Activated naive CD4-positive, alpha-beta T cell treated with anti-CD3 and anti-CD28 coated beads for 36 hours (primary cell): ENCODE measurements at regions of chr11 and their contacts with region 1.

Region 1: DNA sequence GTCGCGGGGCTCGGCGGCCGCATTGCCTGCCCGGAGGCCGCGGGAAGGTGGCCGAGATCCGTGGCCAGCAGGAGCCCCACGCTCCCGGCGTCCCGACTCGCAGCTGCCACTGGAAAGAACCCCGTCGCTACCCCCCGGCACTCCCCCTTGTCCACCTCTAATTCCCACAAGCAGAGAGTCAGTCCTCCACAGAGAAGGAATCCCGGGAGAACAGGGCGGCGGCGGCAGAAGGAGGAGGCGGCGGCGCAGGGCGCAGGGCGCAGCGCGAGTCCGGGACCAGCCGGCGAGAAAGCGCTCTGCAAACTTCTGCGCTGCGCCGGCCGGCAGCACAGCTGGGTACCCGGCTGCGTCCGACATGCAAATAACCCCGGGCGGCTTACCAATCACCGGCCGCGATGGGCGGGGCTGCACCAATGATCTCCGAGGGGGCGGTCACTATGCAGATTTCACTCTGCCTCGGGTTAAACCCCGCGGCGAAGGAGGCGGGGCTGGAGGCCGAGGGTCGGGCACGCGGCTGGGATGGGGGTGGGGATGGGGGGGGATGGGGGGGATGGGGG is at the start of gene ABTB2:
- DNase-seq: peak; percentile 99
- H3K4me3 Mint-ChIP-seq: peak within 1 kb of the TSS; percentile 76
- H3K27ac Mint-ChIP-seq: peak within 1 kb of the TSS; percentile 69
- H3K4me1 Mint-ChIP-seq: peaks cover 16% of the 10 kb centered on the region
- H3K27me3 Mint-ChIP-seq: peaks cover 27% of the 10 kb centered on the region
- total RNA-seq, gene ABTB2: 3.1 to 3.7 TPM

Region 2: GRCh38 chr11:33808228-33808828 is 549.5 kb before region 1 on chr11:
- CTCF ChIA-PET with region 1: interaction called, 4 read pairs
- intact Hi-C with region 1: loop called (anchors 1 kb)
- DNase-seq: peak; percentile 92
- H3K4me3 Mint-ChIP-seq: no peak overlapping the region
- H3K27ac Mint-ChIP-seq: no peak overlapping the region
- H3K4me1 Mint-ChIP-seq: peaks cover 2% of the 10 kb centered on the region
- H3K27me3 Mint-ChIP-seq: peaks cover 7% of the 10 kb centered on the region

Region 3: DNA sequence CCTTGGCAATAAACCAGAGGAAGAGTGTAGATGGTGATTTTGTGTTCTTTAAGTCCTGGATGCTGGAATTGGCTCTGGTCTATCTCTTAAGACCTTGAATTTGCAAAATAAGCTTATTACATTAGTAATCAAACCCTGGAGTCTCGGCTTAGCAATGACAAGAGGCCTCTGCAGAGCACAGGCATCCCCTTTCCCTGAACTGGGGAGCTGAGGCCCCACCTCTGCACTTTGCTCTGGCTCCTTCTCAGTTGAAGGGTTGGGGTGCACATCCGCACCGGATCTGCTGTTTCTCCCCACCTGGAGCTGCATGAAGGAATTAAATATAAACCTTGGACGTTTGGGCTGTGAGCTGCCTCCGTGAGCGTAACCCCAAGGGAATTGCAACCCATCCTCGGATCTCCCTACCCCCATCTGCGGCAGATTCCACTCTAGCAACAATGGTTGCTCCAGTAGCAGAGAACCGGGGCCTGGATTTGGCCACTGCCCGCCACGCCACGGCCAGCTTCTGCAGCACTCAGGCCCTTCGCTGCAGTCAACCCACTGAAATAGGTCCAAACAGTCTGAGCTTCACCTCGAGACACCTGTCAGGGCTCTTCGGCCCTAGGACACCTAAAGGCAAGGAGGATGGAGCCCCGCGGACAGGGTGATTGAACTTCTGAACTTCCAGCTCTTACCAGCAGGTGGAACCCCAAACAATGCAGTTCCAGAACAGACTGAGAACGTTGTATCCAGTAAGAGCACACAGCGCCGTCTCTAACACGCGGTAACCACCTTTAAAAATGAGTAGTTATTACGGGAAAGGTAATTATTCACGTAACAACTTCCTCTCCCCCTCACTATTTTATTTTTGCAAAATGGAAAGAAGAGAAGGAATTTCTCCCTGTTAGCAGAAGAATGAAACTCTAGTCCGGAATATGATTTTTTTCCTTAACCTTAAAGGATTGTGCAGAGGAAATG is 361.0 kb before region 1 on chr11:
- CTCF ChIA-PET with region 1: interaction called, 10 read pairs
- intact Hi-C with region 1: loop called (anchors 1 kb)
- DNase-seq: peak; percentile 87
- H3K4me3 Mint-ChIP-seq: no peak overlapping the region
- H3K27ac Mint-ChIP-seq: no peak overlapping the region
- H3K4me1 Mint-ChIP-seq: peaks cover 13% of the 10 kb centered on the region
- H3K27me3 Mint-ChIP-seq: peaks cover 12% of the 10 kb centered on the region

Region 4: DNA sequence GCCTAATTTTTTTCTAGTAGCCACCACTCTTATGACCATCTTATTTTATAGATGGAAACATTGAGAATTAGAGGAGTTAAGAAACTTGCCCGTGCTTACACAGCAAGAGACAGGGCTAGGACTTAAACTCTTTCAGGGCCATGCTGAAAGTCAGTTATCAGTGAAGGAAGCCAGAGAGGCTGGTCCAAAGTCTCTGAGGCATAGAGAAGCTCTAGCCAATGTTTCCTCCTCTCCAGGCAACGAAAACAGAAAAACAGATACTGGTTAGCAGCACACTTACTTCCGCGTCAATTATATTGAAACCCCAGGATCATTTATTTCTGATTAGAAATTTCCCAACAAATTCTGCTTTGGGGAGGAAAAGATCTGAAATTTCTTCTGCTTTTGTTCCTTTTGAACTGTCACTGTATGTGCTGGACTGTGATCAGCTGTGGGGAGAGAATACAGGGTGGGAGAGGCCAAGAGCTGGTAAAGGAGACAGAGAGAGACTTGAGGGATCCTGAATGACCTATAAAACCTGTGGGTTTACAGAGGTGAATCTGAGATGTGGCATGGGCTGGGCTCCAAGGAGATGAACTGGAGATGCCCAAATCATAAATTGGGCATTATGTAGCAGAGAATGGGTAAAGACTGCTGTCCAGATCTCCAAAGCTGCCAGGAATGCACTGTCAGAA is 343.7 kb before region 1 on chr11:
- CTCF ChIA-PET with region 1: no interaction called
- intact Hi-C with region 1: no loop called
- DNase-seq: no peak
- H3K4me3 Mint-ChIP-seq: no peak overlapping the region
- H3K27ac Mint-ChIP-seq: no peak overlapping the region
- H3K4me1 Mint-ChIP-seq: no peaks in the 10 kb centered on the region
- H3K27me3 Mint-ChIP-seq: no peaks in the 10 kb centered on the region

Region 5: DNA sequence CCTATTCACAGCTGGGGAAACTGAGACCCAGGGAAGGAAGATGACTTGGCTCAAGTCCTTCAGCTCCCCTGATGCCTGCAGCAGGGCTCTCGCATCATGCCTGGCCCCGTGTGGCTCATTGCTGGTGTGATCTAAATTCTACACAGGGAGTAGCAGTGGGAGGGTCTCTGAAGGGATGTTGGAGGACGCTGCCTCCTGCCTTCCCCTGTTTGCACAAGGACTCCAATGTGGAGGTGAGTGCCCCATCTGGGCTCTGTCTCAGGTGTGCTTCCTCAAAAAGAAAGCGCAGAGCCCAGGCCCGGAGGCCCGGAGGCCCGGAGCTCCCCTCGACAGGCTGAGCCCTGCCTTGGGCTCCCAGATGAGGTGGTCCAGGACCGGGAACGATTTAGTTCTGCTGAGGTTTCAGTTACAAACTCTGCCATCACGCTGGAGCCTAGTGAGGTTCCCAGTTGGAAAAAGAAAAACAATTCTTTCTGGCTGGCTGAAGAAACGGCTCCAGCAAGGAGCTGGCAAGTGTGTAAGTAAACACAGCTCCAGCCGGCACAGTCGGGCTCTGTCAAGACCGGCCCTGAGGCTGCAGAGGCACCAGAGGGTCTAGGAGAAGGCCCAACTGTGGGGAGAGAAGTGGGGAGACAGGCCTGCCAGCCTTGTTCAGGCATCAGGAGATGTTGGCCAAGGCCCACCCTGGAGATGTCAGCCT is 202.6 kb before region 1 on chr11:
- CTCF ChIA-PET with region 1: interaction called, 5 read pairs
- intact Hi-C with region 1: loop called (anchors 5 kb)
- DNase-seq: no peak
- H3K4me3 Mint-ChIP-seq: no peak overlapping the region
- H3K27ac Mint-ChIP-seq: no peak overlapping the region
- H3K4me1 Mint-ChIP-seq: peaks cover 12% of the 10 kb centered on the region
- H3K27me3 Mint-ChIP-seq: no peaks in the 10 kb centered on the region

Region 6: DNA sequence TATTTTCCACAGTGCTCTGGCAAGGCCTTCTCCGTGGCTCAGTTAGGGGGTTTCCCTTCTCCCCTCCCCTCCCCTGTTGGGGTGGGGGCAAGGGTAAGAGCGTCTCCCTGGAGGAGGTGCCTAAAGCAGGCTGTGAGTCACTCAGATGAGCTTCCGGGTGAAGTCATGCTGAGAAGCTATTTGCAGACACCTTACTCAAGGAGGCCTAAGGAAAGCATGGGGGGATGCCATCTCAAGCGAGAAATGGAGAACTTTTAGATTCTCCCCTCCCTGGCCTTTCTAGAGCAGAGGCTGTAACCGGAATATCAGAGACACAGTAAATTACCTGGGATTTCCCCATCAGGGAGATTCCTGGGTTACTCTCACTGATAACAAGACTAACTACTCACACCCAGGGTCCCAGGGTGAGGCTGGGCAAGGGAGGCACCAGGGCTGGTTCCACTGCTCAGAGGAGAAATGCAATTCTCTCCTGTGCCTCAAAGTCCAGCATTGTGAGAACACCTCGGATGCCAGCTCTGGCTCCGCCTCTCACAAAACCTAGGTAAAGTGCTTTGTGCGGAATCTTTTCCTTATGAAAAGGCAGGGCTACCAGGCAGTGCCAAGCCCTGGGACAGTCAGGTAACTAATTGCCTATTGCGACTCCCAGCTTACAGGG is 123.6 kb before region 1 on chr11:
- CTCF ChIA-PET with region 1: interaction called, 5 read pairs
- intact Hi-C with region 1: loop called (anchors 1 kb)
- DNase-seq: peak; percentile 93
- H3K4me3 Mint-ChIP-seq: no peak overlapping the region
- H3K27ac Mint-ChIP-seq: peak overlapping the region; percentile 83
- H3K4me1 Mint-ChIP-seq: peaks cover 57% of the 10 kb centered on the region
- H3K27me3 Mint-ChIP-seq: no peaks in the 10 kb centered on the region

Region 7: DNA sequence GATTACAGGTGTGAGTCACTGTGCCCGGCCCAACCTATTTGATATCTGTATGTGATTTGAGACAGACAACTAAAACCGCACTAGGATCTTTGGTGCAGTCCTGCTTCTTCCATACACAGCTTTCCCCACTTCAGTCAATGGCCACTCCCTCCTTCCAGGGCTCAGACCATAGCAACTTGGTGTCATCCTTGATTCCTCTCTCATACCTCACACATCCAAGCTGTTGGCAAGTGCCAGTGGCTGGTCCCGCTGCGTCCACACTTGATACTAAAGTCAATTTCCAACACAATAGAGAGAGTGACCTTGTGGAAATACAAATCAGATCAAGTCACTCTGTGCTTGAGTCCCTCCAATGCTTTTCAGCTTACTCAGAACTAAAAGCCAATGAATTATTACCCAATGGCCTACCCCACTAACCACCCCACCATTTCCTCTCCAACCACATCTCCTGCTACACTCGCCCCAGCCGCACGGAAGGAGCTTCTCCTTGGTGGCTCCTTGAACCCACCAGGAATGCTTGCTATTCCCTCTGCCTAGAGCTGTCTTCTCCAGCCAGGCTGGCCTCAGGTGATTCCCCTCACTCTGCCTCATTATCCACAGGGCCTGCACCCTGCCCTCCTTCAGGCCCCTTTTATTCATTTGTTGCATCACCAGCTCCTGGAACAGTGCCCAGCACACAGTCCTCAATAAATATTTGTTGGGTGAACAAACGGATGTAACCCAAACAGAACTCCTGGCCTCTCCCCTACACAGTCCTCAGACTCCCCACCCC is 12.8 kb before region 1 on chr11:
- CTCF ChIA-PET with region 1: interaction called, 12 read pairs
- intact Hi-C with region 1: no loop called
- DNase-seq: no peak
- H3K4me3 Mint-ChIP-seq: no peak overlapping the region
- H3K27ac Mint-ChIP-seq: no peak overlapping the region
- H3K4me1 Mint-ChIP-seq: no peaks in the 10 kb centered on the region
- H3K27me3 Mint-ChIP-seq: no peaks in the 10 kb centered on the region